ENCODE measurements at regions of chr9 and their contacts with region 1.

Region 1: GRCh38 chr9:34591248-34591916 is 1.9 kb upstream of the CNTFR start:
- DNase-seq: peak; percentile 82
- ATAC-seq: peak; percentile 90
- H3K4me3 Mint-ChIP-seq: peak overlapping the region; percentile 77
- H3K27ac Mint-ChIP-seq: no peak overlapping the region
- H3K4me1 Mint-ChIP-seq: peaks cover 41% of the 10 kb centered on the region
- H3K27me3 Mint-ChIP-seq: peaks cover 77% of the 10 kb centered on the region
- CTCF ChIP-seq: peak; percentile 21

Region 2: GRCh38 chr9:33628865-33629410 is 962.4 kb before region 1 on chr9:
- CTCF ChIA-PET with region 1: interaction called, 3 read pairs
- POLR2A ChIA-PET with region 1: no interaction called
- intact Hi-C with region 1: loop called (anchors 5 kb)
- DNase-seq: no peak
- ATAC-seq: no peak
- H3K4me3 Mint-ChIP-seq: no peak overlapping the region
- H3K27ac Mint-ChIP-seq: no peak overlapping the region
- H3K4me1 Mint-ChIP-seq: peaks cover 3% of the 10 kb centered on the region
- H3K27me3 Mint-ChIP-seq: peaks cover 38% of the 10 kb centered on the region
- CTCF ChIP-seq: no peak

Region 3: GRCh38 chr9:34403554-34404380 is 187.6 kb before region 1 on chr9:
- CTCF ChIA-PET with region 1: interaction called, 24 read pairs
- POLR2A ChIA-PET with region 1: no interaction called
- intact Hi-C with region 1: loop called (anchors 1 kb)
- DNase-seq: no peak
- ATAC-seq: peak; percentile 56
- H3K4me3 Mint-ChIP-seq: no peak overlapping the region
- H3K27ac Mint-ChIP-seq: no peak overlapping the region
- H3K4me1 Mint-ChIP-seq: no peaks in the 10 kb centered on the region
- H3K27me3 Mint-ChIP-seq: no peaks in the 10 kb centered on the region
- CTCF ChIP-seq: peak; percentile 99

Region 4: DNA sequence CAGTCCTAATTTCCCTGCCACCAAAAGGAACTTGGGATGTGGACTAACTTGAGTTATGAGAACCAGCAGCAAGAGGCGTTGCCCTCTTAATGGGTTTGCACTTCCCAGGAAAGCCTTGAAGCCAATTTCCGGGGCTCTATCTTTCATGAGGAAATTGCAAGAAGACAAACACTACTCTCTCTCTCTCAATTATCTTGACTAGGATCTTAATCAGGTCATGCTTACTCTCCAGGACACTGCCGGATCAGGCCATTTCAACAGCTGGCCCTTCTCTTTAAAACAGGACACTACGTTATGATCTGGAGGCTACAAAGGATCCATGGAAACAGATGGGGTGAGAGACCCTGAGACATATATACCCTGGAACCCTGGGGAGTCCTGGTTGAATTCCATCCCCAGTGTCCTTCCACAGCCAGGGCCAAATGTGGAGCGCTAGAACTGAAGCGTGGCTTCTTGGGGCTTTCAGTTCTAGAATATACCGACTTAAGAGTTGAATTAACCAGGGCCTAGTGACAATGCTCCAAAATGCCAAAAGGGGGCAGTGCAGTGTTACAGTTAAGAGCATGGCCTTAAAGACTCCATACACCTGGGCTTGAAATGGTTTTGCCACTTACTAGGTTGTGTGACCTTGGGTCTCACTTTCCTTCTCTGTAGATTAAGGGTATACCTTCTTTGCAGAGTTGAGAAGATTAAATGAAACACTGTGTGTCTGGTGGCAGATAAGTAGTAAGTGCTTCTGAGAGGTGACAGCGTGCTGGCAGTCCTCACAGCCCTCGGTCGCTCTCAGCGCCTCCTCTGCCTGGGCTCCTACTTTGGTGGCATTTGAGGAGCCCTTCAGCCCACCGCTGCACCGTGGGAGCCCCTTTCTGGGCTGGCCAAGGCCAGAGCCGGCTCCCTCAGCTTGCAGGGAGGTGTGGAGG is 154.1 kb before region 1 on chr9:
- CTCF ChIA-PET with region 1: interaction called, 4 read pairs
- POLR2A ChIA-PET with region 1: no interaction called
- intact Hi-C with region 1: loop called (anchors 1 kb)
- DNase-seq: no peak
- ATAC-seq: peak; percentile 85
- H3K4me3 Mint-ChIP-seq: no peak overlapping the region
- H3K27ac Mint-ChIP-seq: no peak overlapping the region
- H3K4me1 Mint-ChIP-seq: no peaks in the 10 kb centered on the region
- H3K27me3 Mint-ChIP-seq: no peaks in the 10 kb centered on the region
- CTCF ChIP-seq: no peak

Region 5: DNA sequence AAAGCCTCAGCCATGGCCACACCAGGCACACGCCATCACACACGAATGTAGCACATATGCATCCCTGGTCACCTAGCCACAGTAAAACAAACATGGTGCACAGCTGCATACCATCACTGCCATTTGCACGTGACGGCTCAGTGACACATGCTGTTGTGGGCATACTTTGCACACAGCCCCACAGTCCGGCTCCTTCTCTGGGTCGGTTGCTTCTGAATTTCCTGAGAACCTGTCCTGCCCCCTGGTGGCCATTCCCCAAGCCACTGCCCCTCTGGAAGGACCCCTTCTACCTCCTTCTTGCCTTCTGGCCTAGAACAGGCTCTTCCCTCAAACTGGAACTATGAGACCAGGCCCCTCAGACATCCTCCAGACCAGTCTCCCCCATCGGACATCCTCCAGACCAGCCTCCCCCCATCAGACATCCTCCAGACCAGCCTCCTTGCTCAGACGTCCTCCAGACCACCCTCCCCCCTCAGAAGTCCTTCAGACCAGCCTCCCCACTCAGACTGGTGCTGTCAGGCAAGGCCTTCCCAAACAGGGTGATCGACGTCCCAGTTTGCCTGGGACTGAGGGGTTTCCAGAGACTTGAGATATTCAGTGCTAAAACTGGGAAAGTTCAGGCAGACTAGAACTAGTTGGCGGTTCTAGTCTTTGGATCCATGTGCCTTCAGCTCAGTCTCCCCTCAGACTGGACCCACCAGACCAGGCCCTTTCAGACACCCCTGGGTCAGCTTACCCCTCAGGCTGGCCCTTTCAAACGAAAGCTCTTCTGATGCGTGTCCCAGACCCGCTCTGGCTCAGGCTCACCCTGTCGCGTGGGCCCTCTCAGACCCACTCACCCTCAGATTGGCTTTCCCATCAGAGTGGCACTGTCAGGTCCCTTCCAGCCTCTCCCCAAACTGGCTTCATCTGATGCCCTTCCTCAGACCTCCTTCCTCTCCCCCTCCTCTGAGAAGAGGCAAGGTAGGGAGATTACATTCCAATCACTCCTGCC is 44.3 kb before region 1 on chr9:
- CTCF ChIA-PET with region 1: interaction called, 11 read pairs
- POLR2A ChIA-PET with region 1: no interaction called
- intact Hi-C with region 1: loop called (anchors 1 kb)
- DNase-seq: no peak
- ATAC-seq: peak; percentile 58
- H3K4me3 Mint-ChIP-seq: no peak overlapping the region
- H3K27ac Mint-ChIP-seq: no peak overlapping the region
- H3K4me1 Mint-ChIP-seq: no peaks in the 10 kb centered on the region
- H3K27me3 Mint-ChIP-seq: peaks cover 29% of the 10 kb centered on the region
- CTCF ChIP-seq: no peak